ENCODE measurements at regions of chr10 and their contacts with region 1.

Region 1: GRCh38 chr10:120850911-120851865 is at the start of gene WDR11:
- DNase-seq: peak; percentile 88
- H3K4me3 ChIP-seq: peak within 1 kb of the TSS; percentile 42 to 92 (median 87)
- H3K27ac ChIP-seq: peak within 1 kb of the TSS; percentile 64
- H3K4me1 ChIP-seq: peaks cover 11% of the 10 kb centered on the region
- H3K27me3 ChIP-seq: no peaks in the 10 kb centered on the region
- CTCF ChIP-seq: no peak
- POLR2A ChIP-seq: peak; percentile 95
- total RNA-seq, gene WDR11: 58.9 and 73.9 TPM in 2 replicates

Region 2: DNA sequence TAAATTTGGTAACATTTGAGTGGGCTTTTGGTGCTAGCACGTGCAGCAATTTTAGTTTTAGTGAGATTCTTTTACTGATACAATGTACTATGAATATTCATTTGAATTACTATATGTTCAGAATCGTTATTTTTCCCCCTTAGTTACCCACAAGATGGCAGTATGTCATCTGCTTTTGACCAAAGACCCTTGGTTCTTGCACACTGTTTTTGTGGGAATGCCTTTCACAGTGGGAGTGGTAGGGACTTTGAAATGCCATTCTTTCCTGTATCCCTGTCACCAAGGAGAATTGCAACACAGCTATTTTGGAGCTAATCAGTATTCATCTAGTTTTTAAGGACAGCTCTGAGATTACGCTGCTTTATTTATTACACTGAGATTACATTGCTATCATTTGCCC is 918.0 kb before region 1 on chr10:
- CTCF ChIA-PET with region 1: no interaction called
- POLR2A ChIA-PET with region 1: no interaction called
- dilution Hi-C with region 1: no loop called
- intact Hi-C with region 1: loop called (anchors 10 kb)
- DNase-seq: peak; percentile 19
- H3K4me3 ChIP-seq: no peak overlapping the region
- H3K27ac ChIP-seq: no peak overlapping the region
- H3K4me1 ChIP-seq: no peaks in the 10 kb centered on the region
- H3K27me3 ChIP-seq: no peaks in the 10 kb centered on the region
- CTCF ChIP-seq: peak in 1 of 2 donors; percentile 3
- POLR2A ChIP-seq: no peak

Region 3: GRCh38 chr10:120838941-120839340 is 12.2 kb before region 1 on chr10:
- CTCF ChIA-PET with region 1: no interaction called
- POLR2A ChIA-PET with region 1: no interaction called
- dilution Hi-C with region 1: no loop called
- intact Hi-C with region 1: no loop called
- DNase-seq: no peak
- H3K4me3 ChIP-seq: no peak overlapping the region
- H3K27ac ChIP-seq: no peak overlapping the region
- H3K4me1 ChIP-seq: no peaks in the 10 kb centered on the region
- H3K27me3 ChIP-seq: no peaks in the 10 kb centered on the region
- CTCF ChIP-seq: no peak
- POLR2A ChIP-seq: no peak

Region 4: GRCh38 chr10:120942806-120943413 is 91.7 kb after region 1 on chr10:
- CTCF ChIA-PET with region 1: no interaction called
- POLR2A ChIA-PET with region 1: no interaction called
- dilution Hi-C with region 1: no loop called
- intact Hi-C with region 1: no loop called
- DNase-seq: peak; percentile 81
- H3K4me3 ChIP-seq: no peak overlapping the region
- H3K27ac ChIP-seq: no peak overlapping the region
- H3K4me1 ChIP-seq: no peaks in the 10 kb centered on the region
- H3K27me3 ChIP-seq: no peaks in the 10 kb centered on the region
- CTCF ChIP-seq: peak; percentile 83 to 85
- POLR2A ChIP-seq: no peak

Region 5: DNA sequence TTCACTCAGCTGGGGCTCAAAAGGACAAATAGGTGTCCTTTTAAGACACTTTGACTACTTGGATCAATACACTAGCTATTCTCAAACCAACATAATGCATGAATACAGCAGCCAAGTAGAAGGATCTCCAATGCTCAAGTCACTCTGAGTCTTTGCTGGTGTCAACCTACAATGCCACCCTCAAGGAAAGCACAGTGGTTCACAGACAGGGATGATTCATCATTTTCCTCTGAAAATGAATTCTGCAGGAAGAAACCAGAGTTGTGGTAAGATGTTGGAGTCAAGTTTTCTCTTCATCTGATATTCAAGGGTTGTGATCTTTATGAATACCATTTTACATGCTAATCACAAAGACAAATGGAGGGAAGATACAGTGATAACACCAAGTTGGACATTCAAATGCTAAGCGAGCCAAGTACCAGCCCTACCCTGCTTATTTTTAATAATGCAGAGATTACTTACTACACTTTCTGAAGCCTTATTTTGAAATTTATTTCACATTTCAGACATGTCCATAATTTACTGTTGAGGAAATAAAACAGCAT is 890.1 kb after region 1 on chr10:
- CTCF ChIA-PET with region 1: no interaction called
- POLR2A ChIA-PET with region 1: no interaction called
- dilution Hi-C with region 1: no loop called
- intact Hi-C with region 1: no loop called
- DNase-seq: no peak
- H3K4me3 ChIP-seq: no peak overlapping the region
- H3K27ac ChIP-seq: no peak overlapping the region
- H3K4me1 ChIP-seq: peaks cover 15% of the 10 kb centered on the region
- H3K27me3 ChIP-seq: no peaks in the 10 kb centered on the region
- CTCF ChIP-seq: no peak
- POLR2A ChIP-seq: no peak

Measured in endothelial cell of umbilical vein (primary cell).